ENCODE measurements at regions of chr9 and their contacts with region 1.

Region 1: DNA sequence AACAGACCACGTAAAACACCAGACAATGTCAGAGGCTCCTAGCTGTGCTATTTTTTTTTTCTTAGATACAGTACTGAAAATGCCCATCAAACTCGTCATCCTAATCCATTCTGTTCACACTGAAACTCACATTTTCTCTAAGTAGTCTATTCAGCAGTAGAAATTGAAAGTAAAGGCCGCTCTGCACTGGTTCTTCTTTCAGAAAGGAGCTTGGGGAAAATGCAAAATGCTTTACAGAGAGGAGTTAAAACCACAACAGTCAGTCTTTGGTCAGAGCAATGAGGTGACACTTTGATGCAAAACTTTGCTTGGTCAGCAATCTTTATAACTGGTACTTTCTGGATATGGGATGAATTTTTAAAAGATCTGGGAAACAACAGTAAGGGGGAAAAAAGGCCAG is 43.8 kb upstream of the SUSD1 start:
- DNase-seq: no peak
- ATAC-seq: no peak
- H3K4me3 ChIP-seq: no peak overlapping the region
- H3K4me3 Mint-ChIP-seq: peak overlapping the region in 1 of 10 donors; percentile 70
- H3K27ac ChIP-seq: no peak overlapping the region
- H3K27ac Mint-ChIP-seq: peak overlapping the region in 8 of 9 donors; percentile 2 to 82 (median 46)
- H3K4me1 ChIP-seq: peaks cover 0 to 5% of the 10 kb centered on the region in 2 donors
- H3K4me1 Mint-ChIP-seq: peaks cover 11 to 26% (median 17%) of the 10 kb centered on the region in 7 donors
- H3K27me3 ChIP-seq: no peaks in the 10 kb centered on the region
- H3K27me3 Mint-ChIP-seq: no peaks in the 10 kb centered on the region

Region 2: DNA sequence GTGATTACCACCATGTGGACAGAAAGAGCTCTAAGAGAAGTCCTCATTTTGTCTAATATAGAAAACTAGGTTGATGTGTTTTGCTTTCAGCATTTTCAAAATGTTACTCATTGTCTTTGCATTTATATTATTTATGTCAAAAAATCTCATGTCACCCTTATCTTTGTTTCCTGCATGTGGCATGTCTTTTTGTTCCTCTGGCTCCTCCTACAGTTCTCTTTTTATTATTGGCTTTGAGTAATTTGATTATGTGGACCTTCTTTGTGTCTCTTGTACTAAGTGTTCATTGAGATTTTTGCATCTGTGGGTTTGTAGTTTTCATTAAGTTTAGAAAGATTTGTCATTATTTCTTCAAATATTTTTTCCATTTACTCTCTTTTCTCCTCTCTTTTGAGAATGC is 498.7 kb before region 1 on chr9:
- CTCF ChIA-PET with region 1: no interaction called
- POLR2A ChIA-PET with region 1: no interaction called
- intact Hi-C with region 1: no loop called
- DNase-seq: no peak
- ATAC-seq: no peak
- H3K4me3 ChIP-seq: no peak overlapping the region
- H3K4me3 Mint-ChIP-seq: no peak overlapping the region
- H3K27ac ChIP-seq: no peak overlapping the region
- H3K27ac Mint-ChIP-seq: no peak overlapping the region
- H3K4me1 ChIP-seq: no peaks in the 10 kb centered on the region
- H3K4me1 Mint-ChIP-seq: peaks cover 0 to 1% (median 0%) of the 10 kb centered on the region in 7 donors
- H3K27me3 ChIP-seq: no peaks in the 10 kb centered on the region
- H3K27me3 Mint-ChIP-seq: no peaks in the 10 kb centered on the region

Region 3: GRCh38 chr9:111909441-111909840 is 309.5 kb before region 1 on chr9:
- CTCF ChIA-PET with region 1: no interaction called
- POLR2A ChIA-PET with region 1: no interaction called
- intact Hi-C with region 1: no loop called
- DNase-seq: no peak
- ATAC-seq: peak; percentile 47
- H3K4me3 ChIP-seq: no peak overlapping the region
- H3K4me3 Mint-ChIP-seq: peak overlapping the region in 9 of 10 donors; percentile 5 to 77 (median 49)
- H3K27ac ChIP-seq: no peak overlapping the region
- H3K27ac Mint-ChIP-seq: peak overlapping the region in 7 of 9 donors; percentile 16 to 77 (median 40)
- H3K4me1 ChIP-seq: peaks cover 42 to 57% of the 10 kb centered on the region in 2 donors
- H3K4me1 Mint-ChIP-seq: peaks cover 69 to 100% (median 95%) of the 10 kb centered on the region in 7 donors
- H3K27me3 ChIP-seq: no peaks in the 10 kb centered on the region
- H3K27me3 Mint-ChIP-seq: no peaks in the 10 kb centered on the region

Region 4: GRCh38 chr9:112097712-112098688 is 120.9 kb before region 1 on chr9:
- CTCF ChIA-PET with region 1: no interaction called
- POLR2A ChIA-PET with region 1: no interaction called
- intact Hi-C with region 1: loop called (anchors 10 kb)
- DNase-seq: peak; percentile 41 to 85 (median 68)
- ATAC-seq: peak; percentile 93
- H3K4me3 ChIP-seq: no peak overlapping the region
- H3K4me3 Mint-ChIP-seq: no peak overlapping the region
- H3K27ac ChIP-seq: no peak overlapping the region
- H3K27ac Mint-ChIP-seq: peak overlapping the region in 1 of 9 donors; percentile 15
- H3K4me1 ChIP-seq: peaks cover 0 to 4% of the 10 kb centered on the region in 2 donors
- H3K4me1 Mint-ChIP-seq: peaks cover 2 to 32% (median 12%) of the 10 kb centered on the region in 7 donors
- H3K27me3 ChIP-seq: no peaks in the 10 kb centered on the region
- H3K27me3 Mint-ChIP-seq: peaks cover 0 to 3% (median 0%) of the 10 kb centered on the region in 5 donors

Region 5: GRCh38 chr9:112174218-112174964 is 44.5 kb before region 1 on chr9:
- CTCF ChIA-PET with region 1: no interaction called
- POLR2A ChIA-PET with region 1: interaction called, 4 read pairs
- intact Hi-C with region 1: loop called (anchors 1 to 5 kb)
- DNase-seq: peak; percentile 42 to 80 (median 63)
- ATAC-seq: peak; percentile 87
- H3K4me3 ChIP-seq: peak overlapping the region; percentile 67
- H3K4me3 Mint-ChIP-seq: peak overlapping the region; percentile 83 to 94 (median 90)
- H3K27ac ChIP-seq: peak overlapping the region; percentile 9
- H3K27ac Mint-ChIP-seq: peak overlapping the region; percentile 65 to 95 (median 87)
- H3K4me1 ChIP-seq: peaks cover 33 to 54% of the 10 kb centered on the region in 2 donors
- H3K4me1 Mint-ChIP-seq: peaks cover 49 to 81% (median 73%) of the 10 kb centered on the region in 7 donors
- H3K27me3 ChIP-seq: no peaks in the 10 kb centered on the region
- H3K27me3 Mint-ChIP-seq: peaks cover 0 to 3% (median 0%) of the 10 kb centered on the region in 5 donors

Region 6: GRCh38 chr9:112180387-112180881 is 38.5 kb before region 1 on chr9:
- CTCF ChIA-PET with region 1: no interaction called
- POLR2A ChIA-PET with region 1: interaction called, 4 read pairs
- intact Hi-C with region 1: loop called (anchors 1 to 5 kb)
- DNase-seq: peak in 4 of 9 donors; percentile 3 to 55 (median 18)
- ATAC-seq: peak; percentile 74
- H3K4me3 ChIP-seq: no peak overlapping the region
- H3K4me3 Mint-ChIP-seq: peak overlapping the region in 5 of 10 donors; percentile 35 to 66 (median 51)
- H3K27ac ChIP-seq: no peak overlapping the region
- H3K27ac Mint-ChIP-seq: peak overlapping the region in 8 of 9 donors; percentile 39 to 90 (median 78)
- H3K4me1 ChIP-seq: peaks cover 26 to 44% of the 10 kb centered on the region in 2 donors
- H3K4me1 Mint-ChIP-seq: peaks cover 26 to 61% (median 56%) of the 10 kb centered on the region in 7 donors
- H3K27me3 ChIP-seq: no peaks in the 10 kb centered on the region
- H3K27me3 Mint-ChIP-seq: peaks cover 0 to 8% (median 0%) of the 10 kb centered on the region in 5 donors

Region 7: DNA sequence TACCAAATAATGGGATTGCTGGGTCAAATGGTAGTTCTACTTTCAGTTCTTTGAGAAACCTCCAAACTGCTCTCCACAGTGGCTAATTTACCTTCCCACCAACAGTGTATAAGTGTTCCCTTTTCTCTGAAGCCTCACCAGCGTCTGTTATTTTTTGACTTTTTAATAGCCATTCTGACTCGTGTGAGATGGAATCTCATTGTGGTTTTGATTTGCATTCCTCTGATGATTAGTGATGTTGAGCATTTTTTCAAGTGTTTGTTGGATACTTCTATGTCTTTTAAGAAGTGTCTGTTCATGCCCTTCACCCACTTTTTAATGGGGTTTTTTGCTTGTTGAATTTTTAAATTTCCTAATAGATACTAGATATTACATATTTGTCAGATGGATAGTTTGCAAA is 15.4 kb before region 1 on chr9:
- CTCF ChIA-PET with region 1: no interaction called
- POLR2A ChIA-PET with region 1: no interaction called
- intact Hi-C with region 1: loop called in 1 of 2 experiments (anchors 2 kb)
- DNase-seq: no peak
- ATAC-seq: no peak
- H3K4me3 ChIP-seq: no peak overlapping the region
- H3K4me3 Mint-ChIP-seq: no peak overlapping the region
- H3K27ac ChIP-seq: no peak overlapping the region
- H3K27ac Mint-ChIP-seq: no peak overlapping the region
- H3K4me1 ChIP-seq: no peaks in the 10 kb centered on the region
- H3K4me1 Mint-ChIP-seq: peaks cover 0 to 8% (median 0%) of the 10 kb centered on the region in 7 donors
- H3K27me3 ChIP-seq: no peaks in the 10 kb centered on the region
- H3K27me3 Mint-ChIP-seq: no peaks in the 10 kb centered on the region

Region 8: GRCh38 chr9:112252194-112252593 is 33.3 kb after region 1 on chr9:
- CTCF ChIA-PET with region 1: no interaction called
- POLR2A ChIA-PET with region 1: no interaction called
- intact Hi-C with region 1: no loop called
- DNase-seq: no peak
- ATAC-seq: no peak
- H3K4me3 ChIP-seq: no peak overlapping the region
- H3K4me3 Mint-ChIP-seq: no peak overlapping the region
- H3K27ac ChIP-seq: no peak overlapping the region
- H3K27ac Mint-ChIP-seq: peak overlapping the region in 2 of 9 donors; percentile 42 to 64
- H3K4me1 ChIP-seq: no peaks in the 10 kb centered on the region
- H3K4me1 Mint-ChIP-seq: peaks cover 11 to 25% (median 22%) of the 10 kb centered on the region in 7 donors
- H3K27me3 ChIP-seq: no peaks in the 10 kb centered on the region
- H3K27me3 Mint-ChIP-seq: no peaks in the 10 kb centered on the region

Measured in naive thymus-derived CD4-positive, alpha-beta T cell (primary cell).